ENCODE measurements at regions of chr2 and their contacts with region 1.

Region 1: DNA sequence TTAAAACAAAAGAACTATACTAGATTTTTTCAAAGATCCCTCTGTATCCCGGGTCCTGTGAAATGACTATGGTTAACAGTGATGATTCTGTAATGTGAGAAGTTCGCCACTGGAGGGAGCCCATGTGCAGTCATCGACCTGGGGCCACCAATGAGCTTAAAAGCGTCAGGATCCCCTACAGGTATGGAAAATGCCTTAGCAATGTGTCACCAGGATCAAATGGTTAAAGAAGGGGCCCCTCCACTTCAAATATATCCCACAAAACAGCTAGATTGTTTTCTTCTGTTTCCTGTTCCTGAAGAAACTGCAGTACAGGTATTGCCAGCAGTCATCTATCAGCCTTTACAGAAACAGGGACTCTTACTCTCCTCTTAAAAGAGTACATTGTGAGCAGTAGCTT is 15.3 kb downstream of the CHRNA1 start:
- DNase-seq: peak; percentile 53 to 83 (median 74)
- ATAC-seq: peak; percentile 45
- H3K4me3 ChIP-seq: no peak overlapping the region
- H3K4me3 Mint-ChIP-seq: no peak overlapping the region
- H3K27ac ChIP-seq: no peak overlapping the region
- H3K27ac Mint-ChIP-seq: peak overlapping the region; percentile 32
- H3K4me1 ChIP-seq: peaks cover 15% of the 10 kb centered on the region
- H3K4me1 Mint-ChIP-seq: peaks cover 33% of the 10 kb centered on the region
- H3K27me3 ChIP-seq: no peaks in the 10 kb centered on the region
- H3K27me3 Mint-ChIP-seq: no peaks in the 10 kb centered on the region
- CTCF ChIP-seq: peak; percentile 85

Region 2: DNA sequence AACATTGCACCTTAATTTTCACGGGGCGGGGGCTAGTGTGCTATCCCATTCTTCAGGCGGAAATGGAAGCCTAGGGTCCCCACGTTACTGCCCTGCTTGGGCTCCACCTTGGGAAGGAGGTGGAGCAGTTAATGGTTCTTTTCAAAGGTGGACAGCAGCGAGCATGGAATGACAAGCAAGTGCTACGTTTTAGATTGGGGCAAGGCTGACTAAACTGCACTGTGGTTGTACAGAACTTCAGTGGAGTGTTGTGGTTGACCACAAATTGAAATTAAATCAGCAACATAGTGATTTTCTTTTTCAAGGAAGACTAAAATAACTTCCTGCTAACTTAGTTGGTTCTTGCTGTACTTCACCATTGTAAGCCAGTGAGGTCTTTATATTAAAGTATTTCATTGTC is 31.7 kb before region 1 on chr2:
- CTCF ChIA-PET with region 1: interaction called, 5 read pairs
- POLR2A ChIA-PET with region 1: no interaction called
- intact Hi-C with region 1: loop called in 1 of 2 experiments (anchors 2 kb)
- DNase-seq: peak in 3 of 9 experiments; percentile 52 to 71 (median 52)
- ATAC-seq: peak; percentile 77
- H3K4me3 ChIP-seq: peak overlapping the region; percentile 13 to 41
- H3K4me3 Mint-ChIP-seq: peak overlapping the region; percentile 67
- H3K27ac ChIP-seq: no peak overlapping the region
- H3K27ac Mint-ChIP-seq: peak overlapping the region; percentile 56
- H3K4me1 ChIP-seq: peaks cover 32% of the 10 kb centered on the region
- H3K4me1 Mint-ChIP-seq: peaks cover 31% of the 10 kb centered on the region
- H3K27me3 ChIP-seq: no peaks in the 10 kb centered on the region
- H3K27me3 Mint-ChIP-seq: no peaks in the 10 kb centered on the region
- CTCF ChIP-seq: no peak

Region 3: DNA sequence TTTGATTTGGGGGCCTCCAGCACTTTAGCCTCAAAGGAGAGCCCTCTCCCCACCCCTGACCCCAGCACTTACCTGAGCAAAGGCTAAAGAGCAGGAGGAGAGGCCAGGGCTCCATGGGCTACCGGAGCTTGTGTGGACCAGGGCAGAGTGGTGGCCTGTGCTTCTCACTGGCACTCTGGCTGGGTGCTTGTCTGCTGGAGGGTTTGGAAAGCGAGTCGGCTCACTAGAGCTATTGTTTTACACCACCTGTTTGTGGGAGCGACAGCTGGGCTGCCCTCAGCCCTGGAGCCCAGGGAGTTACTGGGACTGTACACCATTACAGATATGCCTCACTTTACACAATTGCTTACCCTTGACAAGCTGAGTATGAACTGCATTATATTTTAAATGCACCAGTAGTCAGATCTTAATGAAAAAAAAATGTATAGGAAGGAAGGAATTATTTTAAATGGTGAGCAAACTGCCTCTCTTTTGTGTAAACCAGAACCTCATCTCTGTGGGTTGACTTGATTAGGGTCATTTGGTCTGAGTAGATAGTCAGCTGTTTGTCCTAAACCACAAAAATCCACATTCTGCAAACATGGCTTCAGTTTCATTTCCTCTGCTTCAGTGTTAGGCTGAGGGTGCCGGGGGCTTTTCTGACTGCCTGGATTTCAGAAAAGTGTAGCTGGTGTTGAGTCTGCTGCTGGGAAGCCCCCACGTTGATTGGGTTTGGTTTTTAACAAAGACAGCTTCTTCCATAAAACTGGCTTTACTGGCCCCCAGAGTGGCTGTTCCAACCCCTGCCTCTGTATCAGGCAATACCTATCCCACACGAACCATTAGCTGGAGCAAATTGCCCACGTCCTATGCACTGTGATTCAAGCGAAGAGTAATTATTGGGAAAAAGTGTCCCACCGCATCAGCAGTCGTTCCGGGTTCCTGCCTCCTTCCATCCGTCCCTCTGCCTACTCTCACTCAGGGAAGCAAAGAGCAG is 15.6 kb after region 1 on chr2 and contains the start of gene CHRNA1:
- CTCF ChIA-PET with region 1: interaction called, 20 read pairs
- POLR2A ChIA-PET with region 1: no interaction called
- intact Hi-C with region 1: no loop called
- DNase-seq: no peak
- ATAC-seq: no peak
- H3K4me3 ChIP-seq: no peak within 1 kb of the TSS
- H3K4me3 Mint-ChIP-seq: no peak within 1 kb of the TSS
- H3K27ac ChIP-seq: no peak within 1 kb of the TSS
- H3K27ac Mint-ChIP-seq: no peak within 1 kb of the TSS
- H3K4me1 ChIP-seq: peaks cover 5% of the 10 kb centered on the region
- H3K4me1 Mint-ChIP-seq: peaks cover 8% of the 10 kb centered on the region
- H3K27me3 ChIP-seq: no peaks in the 10 kb centered on the region
- H3K27me3 Mint-ChIP-seq: no peaks in the 10 kb centered on the region
- CTCF ChIP-seq: no peak
- total RNA-seq, gene CHRNA1: 0.27 to 0.44 TPM

Region 4: DNA sequence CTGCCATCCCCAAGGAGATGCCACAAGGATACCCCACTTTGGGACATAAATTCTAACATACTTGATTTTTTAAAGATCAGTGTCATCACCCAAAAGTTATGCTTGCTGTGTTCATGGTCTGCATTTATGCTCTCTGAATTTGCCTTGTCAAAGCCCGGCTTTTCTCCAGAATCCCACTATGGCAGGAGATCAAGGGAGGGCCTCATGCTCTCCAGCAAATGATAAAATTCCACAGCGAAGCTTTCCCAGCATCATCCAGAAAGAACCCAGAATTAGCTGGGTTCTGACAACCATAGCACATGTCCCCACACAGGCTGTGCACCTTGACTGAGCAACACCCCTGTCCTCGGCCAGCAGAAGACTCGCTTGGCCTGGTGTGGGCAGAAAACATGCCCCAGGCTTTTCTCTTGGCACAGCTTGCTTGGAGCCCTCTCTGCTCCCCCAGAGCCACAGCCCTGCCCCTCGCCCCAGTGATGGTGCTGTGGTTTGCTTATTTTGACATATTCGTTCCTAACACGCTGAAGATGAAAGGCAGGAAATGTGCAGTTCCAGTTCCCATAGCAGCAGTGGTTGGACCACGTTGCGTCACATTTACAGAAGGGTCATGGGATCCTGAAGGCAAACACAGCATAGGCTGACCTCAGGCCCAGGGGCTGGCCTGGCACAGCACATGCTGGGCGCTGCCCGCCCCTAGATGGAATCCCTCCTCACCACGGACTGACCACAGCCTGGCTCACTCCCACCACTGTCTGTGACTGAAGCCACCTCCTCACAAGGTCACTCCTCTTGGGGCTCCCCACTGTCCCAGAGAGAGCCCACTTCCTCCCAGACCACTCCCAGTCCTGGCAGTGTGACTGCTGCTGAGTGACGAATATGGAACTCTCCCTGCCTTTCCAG is 29.4 kb after region 1 on chr2:
- CTCF ChIA-PET with region 1: interaction called, 7 read pairs
- POLR2A ChIA-PET with region 1: no interaction called
- intact Hi-C with region 1: loop called (anchors 1 kb)
- DNase-seq: peak; percentile 61 to 94 (median 81)
- ATAC-seq: peak; percentile 84
- H3K4me3 ChIP-seq: peak overlapping the region in 1 of 2 experiments; percentile 16
- H3K4me3 Mint-ChIP-seq: peak overlapping the region; percentile 57
- H3K27ac ChIP-seq: peak overlapping the region; percentile 57 to 62
- H3K27ac Mint-ChIP-seq: peak overlapping the region; percentile 93
- H3K4me1 ChIP-seq: peaks cover 52% of the 10 kb centered on the region
- H3K4me1 Mint-ChIP-seq: peaks cover 51% of the 10 kb centered on the region
- H3K27me3 ChIP-seq: no peaks in the 10 kb centered on the region
- H3K27me3 Mint-ChIP-seq: no peaks in the 10 kb centered on the region
- CTCF ChIP-seq: no peak

Region 5: GRCh38 chr2:174992886-174993285 is 243.9 kb after region 1 on chr2:
- CTCF ChIA-PET with region 1: interaction called, 43 read pairs
- POLR2A ChIA-PET with region 1: interaction called, 3 read pairs
- intact Hi-C with region 1: loop called (anchors 1 kb)
- DNase-seq: no peak
- ATAC-seq: no peak
- H3K4me3 ChIP-seq: no peak overlapping the region
- H3K4me3 Mint-ChIP-seq: no peak overlapping the region
- H3K27ac ChIP-seq: no peak overlapping the region
- H3K27ac Mint-ChIP-seq: no peak overlapping the region
- H3K4me1 ChIP-seq: no peaks in the 10 kb centered on the region
- H3K4me1 Mint-ChIP-seq: peaks cover 6% of the 10 kb centered on the region
- H3K27me3 ChIP-seq: no peaks in the 10 kb centered on the region
- H3K27me3 Mint-ChIP-seq: peaks cover 12% of the 10 kb centered on the region
- CTCF ChIP-seq: no peak